Activated CD4-positive, alpha-beta T cell treated with anti-CD3 and anti-CD28 coated beads for 36 hours (primary cell): ENCODE measurements at regions of chr4 and their contacts with region 1.

Region 1: DNA sequence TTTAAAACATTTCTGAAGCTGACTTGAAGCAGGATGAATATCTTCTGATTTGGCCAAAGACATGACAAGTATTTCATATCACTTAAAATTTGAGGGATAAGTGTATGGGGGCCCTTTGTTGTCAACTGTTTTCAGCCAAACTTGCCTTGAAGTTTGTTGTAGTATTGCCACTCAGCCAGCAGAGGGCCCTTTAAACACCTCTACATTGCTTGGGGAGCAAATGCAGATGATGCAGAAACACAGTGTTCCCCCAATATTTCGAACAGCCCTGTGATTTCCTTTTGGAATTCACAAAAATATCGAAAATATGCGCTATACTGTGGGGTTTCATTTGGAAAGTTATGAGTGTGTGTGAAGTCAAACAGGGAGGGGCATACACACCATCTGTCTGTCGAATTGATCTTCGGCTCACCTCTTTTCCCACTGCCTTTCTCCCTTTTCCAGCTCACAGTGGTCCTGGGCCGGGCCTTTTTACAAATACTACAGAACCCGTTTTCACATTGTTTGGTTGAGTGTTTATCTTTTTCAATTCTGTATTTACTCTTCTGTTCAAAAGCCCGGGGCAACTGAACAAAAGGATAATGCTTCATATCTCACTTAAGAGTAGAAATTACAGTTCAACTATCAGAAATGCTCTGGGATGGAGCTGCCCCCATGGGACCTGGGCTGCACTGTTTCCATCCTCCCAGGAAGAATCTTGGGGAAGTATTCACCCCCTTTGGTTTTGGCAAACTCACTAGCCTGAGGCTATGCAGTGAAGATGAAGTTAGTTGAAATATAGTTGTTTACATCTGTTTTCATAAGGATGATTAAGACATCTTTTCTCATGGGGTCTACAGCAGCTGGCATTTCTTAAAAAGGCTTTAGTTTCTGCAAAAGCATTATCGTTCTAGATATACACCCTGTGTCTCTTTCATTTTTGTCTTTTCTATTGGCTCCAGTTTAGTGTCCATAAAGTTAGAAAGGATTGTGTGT is 137.6 kb downstream of the EGF start:
- DNase-seq: peak; percentile 66
- ATAC-seq: peak; percentile 50
- H3K4me3 Mint-ChIP-seq: no peak overlapping the region
- H3K27ac Mint-ChIP-seq: no peak overlapping the region
- H3K4me1 Mint-ChIP-seq: peaks cover 5% of the 10 kb centered on the region
- H3K27me3 Mint-ChIP-seq: peaks cover 2% of the 10 kb centered on the region

Region 2: DNA sequence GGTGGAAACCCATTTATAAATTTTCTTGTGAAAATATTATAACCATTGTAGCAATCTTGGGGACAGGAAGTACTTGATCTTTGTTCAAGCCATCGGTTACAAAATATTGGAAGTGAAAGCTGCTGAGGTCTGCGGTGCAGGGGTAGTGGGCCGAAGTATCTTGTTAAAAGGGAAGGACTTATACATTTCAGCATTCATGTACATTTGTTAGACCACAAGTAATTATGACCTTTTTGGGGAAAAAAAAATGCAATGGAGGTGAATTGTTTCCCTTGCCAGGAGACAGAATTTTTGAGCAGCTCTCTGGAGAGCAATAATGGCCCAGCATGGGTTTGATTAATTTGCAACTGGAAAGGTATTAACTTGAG is 16.2 kb before region 1 on chr4:
- CTCF ChIA-PET with region 1: interaction called, 11 read pairs
- POLR2A ChIA-PET with region 1: no interaction called
- intact Hi-C with region 1: no loop called
- DNase-seq: no peak
- ATAC-seq: no peak
- H3K4me3 Mint-ChIP-seq: no peak overlapping the region
- H3K27ac Mint-ChIP-seq: no peak overlapping the region
- H3K4me1 Mint-ChIP-seq: no peaks in the 10 kb centered on the region
- H3K27me3 Mint-ChIP-seq: peaks cover 24% of the 10 kb centered on the region

Region 3: GRCh38 chr4:110211007-110211769 is 160.9 kb after region 1 on chr4:
- CTCF ChIA-PET with region 1: interaction called, 3 read pairs
- POLR2A ChIA-PET with region 1: no interaction called
- intact Hi-C with region 1: loop called (anchors 1 kb)
- DNase-seq: peak; percentile 28
- ATAC-seq: peak; percentile 60
- H3K4me3 Mint-ChIP-seq: no peak overlapping the region
- H3K27ac Mint-ChIP-seq: no peak overlapping the region
- H3K4me1 Mint-ChIP-seq: peaks cover 2% of the 10 kb centered on the region
- H3K27me3 Mint-ChIP-seq: no peaks in the 10 kb centered on the region